ENCODE measurements at regions of chr11 and their contacts with region 1.

Region 1: DNA sequence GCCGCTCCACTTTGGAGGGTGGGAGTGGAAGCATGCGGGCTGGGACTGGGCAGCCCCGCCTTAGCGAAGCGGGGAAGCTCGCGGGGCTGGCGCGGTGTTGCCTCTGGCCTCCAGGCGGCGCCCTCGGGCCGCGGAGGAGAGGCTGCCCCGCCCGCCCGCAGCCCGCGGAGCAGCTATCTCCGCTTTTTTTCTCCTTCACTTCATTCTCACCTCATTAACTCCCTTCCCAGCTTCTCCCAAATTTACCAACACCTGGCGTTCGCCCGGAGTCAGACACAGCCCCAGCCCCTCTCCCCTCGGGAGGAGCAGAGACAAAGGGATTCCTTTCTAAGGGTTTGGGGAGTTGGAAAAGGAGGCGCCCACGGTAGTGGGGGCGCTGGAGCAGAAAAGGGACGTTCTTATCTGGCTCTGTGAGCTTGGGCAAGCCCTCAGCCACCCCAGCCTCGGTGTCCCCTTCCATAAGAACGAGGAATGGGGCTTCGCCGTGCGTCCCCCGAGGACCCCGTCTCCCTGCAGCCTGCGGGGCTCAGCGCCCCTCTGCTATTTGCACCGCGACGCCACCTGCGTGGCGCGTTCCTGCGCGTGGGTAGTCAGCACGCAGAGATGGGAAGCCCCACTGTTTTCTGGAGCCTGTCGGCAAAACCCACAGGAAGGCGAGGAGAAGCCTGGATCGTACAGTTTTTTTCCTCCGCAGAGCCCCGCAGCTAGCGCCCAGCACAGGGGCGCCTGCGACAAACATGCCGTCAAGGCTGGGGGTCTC is 1.5 kb upstream of the WNT11 start:
- DNase-seq: peak in 1 of 2 experiments; percentile 89
- H3K4me3 ChIP-seq: peak overlapping the region; percentile 30 to 62 (median 56)
- H3K27ac ChIP-seq: no peak overlapping the region
- H3K4me1 ChIP-seq: peaks cover 7 to 41% (median 20%) of the 10 kb centered on the region in 4 experiments
- H3K27me3 ChIP-seq: peaks cover 77 to 94% (median 87%) of the 10 kb centered on the region in 4 experiments
- CTCF ChIP-seq: peak; percentile 84 to 89 (median 84)
- EP300 ChIP-seq: no peak
- POLR2A ChIP-seq: no peak
- RAD21 ChIP-seq: peak; percentile 84 to 89

Region 2: DNA sequence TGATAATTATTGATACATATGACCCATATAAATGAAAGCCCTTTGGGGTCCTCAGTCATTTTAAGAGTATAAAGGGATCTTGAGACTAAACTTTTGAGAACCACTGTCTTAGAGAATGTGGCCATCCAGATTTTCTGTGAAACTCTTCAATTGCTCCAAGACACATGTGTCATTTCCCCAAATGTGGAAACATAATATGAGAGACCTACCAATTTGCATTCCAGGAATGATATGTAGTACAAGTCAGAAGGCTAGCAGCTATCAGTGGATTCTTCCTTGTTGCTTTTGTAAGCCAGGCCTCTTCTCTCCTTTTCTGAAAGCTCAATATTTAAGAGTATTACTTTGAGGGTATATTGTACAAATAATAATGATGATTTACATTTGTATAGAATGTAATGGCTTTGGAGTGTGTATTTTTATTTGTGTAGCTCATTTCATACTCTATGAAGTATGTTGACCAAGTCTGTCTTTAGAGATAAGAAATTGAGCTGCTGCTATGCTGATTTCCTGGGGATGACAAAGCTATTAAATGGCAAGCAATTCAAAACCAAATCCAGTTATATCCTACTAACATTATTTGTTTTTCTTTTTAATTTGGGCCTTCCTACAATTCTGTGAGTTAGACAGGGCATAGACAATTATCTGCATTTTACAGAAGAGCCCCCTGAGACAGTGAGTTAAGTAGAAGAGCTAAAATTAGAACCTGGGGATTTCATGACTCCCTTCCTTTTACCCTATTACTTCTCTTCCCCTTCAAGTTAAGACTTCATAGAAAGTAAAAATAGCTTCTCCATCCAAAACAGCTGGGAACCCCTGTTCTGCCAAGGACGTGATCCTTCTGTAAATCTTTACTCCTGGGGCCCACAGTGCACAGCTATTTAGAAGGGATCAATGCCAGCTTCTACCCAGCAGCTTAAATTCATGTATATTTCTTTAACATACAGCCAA is 133.4 kb before region 1 on chr11:
- CTCF ChIA-PET with region 1: no interaction called
- POLR2A ChIA-PET with region 1: no interaction called
- DNase-seq: no peak
- H3K4me3 ChIP-seq: no peak overlapping the region
- H3K27ac ChIP-seq: no peak overlapping the region
- H3K4me1 ChIP-seq: no peaks in the 10 kb centered on the region
- H3K27me3 ChIP-seq: no peaks in the 10 kb centered on the region
- CTCF ChIP-seq: no peak
- EP300 ChIP-seq: no peak
- POLR2A ChIP-seq: no peak
- RAD21 ChIP-seq: no peak

Region 3: DNA sequence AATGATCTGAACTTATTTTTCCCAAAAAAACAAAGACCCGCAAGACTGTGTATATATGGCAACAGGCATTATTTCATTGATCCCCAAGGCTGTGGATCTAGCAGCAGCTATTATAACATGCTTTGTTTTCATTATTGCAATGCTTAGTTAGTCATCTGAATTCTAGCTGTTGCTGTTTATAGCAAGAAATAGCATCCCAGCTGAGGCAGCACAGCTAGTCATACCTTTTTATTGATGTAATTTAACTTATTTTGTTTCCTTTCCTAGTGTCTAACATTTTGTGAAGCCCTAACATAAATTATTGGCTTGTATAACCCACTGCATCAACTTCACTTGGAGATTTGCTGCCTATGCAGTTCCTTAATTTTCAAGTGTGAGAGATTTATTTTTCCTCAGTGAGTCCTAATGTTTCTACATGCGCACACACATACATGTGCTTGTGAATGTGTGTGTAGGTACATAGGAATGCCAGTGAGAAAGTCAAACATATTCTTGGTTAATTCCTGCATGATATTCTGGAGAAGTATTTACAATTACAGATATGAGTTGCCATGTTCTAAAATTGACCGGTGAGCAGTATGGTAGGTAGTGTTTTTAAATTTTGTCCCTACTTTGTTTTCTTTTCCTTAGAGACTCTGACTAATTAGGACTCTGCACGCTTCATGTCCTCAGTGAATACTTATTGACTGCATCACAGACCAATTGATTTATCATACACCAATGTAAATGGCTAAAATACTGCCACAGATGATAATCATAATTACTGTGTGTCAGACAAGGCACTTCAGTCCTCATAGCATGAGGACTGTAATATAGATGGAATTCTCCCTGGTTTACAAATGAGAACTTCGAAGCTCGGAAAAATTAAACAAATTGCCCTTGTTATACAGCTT is 120.8 kb before region 1 on chr11:
- CTCF ChIA-PET with region 1: no interaction called
- POLR2A ChIA-PET with region 1: no interaction called
- DNase-seq: no peak
- H3K4me3 ChIP-seq: no peak overlapping the region
- H3K27ac ChIP-seq: no peak overlapping the region
- H3K4me1 ChIP-seq: peaks cover 0 to 12% (median 4%) of the 10 kb centered on the region in 4 experiments; a peak in 4 of 7 replicates
- H3K27me3 ChIP-seq: no peaks in the 10 kb centered on the region
- CTCF ChIP-seq: no peak
- EP300 ChIP-seq: no peak
- POLR2A ChIP-seq: no peak
- RAD21 ChIP-seq: no peak

Region 4: GRCh38 chr11:76193219-76193618 is 14.6 kb before region 1 on chr11:
- CTCF ChIA-PET with region 1: interaction called, 38 read pairs
- POLR2A ChIA-PET with region 1: interaction called, 4 read pairs
- DNase-seq: peak in 1 of 2 experiments; percentile 85
- H3K4me3 ChIP-seq: no peak overlapping the region
- H3K27ac ChIP-seq: no peak overlapping the region
- H3K4me1 ChIP-seq: peaks cover 0 to 10% (median 0%) of the 10 kb centered on the region in 4 experiments; a peak in 1 of 7 replicates
- H3K27me3 ChIP-seq: no peaks in the 10 kb centered on the region
- CTCF ChIP-seq: no peak
- EP300 ChIP-seq: no peak
- POLR2A ChIP-seq: no peak
- RAD21 ChIP-seq: no peak

Region 5: DNA sequence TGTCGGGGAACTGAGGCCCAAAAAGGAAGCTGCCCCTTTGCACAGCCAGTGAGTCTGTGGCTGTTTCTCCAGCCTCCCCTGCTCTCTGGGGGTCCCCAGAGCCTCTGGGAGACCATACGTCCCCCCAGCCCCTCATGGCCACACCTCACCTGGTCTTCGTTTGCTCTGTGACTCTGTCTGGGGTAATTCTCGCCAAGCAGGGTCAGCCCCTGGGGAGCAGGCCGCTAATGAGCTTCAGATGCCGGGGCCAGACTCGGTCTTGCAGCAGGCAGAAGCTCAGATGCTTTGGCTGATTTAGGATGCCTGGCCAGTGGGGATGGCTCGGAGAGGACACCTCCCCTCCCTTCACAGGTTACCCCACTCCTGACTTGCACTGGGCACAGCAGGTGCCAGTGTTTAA is 22.6 kb after region 1 on chr11:
- CTCF ChIA-PET with region 1: interaction called, 31 read pairs
- POLR2A ChIA-PET with region 1: interaction called, 39 read pairs
- DNase-seq: no peak
- H3K4me3 ChIP-seq: no peak overlapping the region
- H3K27ac ChIP-seq: no peak overlapping the region
- H3K4me1 ChIP-seq: peaks cover 0 to 8% (median 4%) of the 10 kb centered on the region in 4 experiments; a peak in 4 of 7 replicates
- H3K27me3 ChIP-seq: no peaks in the 10 kb centered on the region; a peak in 2 of 7 replicates
- CTCF ChIP-seq: no peak
- EP300 ChIP-seq: no peak
- POLR2A ChIP-seq: no peak
- RAD21 ChIP-seq: no peak

Region 6: DNA sequence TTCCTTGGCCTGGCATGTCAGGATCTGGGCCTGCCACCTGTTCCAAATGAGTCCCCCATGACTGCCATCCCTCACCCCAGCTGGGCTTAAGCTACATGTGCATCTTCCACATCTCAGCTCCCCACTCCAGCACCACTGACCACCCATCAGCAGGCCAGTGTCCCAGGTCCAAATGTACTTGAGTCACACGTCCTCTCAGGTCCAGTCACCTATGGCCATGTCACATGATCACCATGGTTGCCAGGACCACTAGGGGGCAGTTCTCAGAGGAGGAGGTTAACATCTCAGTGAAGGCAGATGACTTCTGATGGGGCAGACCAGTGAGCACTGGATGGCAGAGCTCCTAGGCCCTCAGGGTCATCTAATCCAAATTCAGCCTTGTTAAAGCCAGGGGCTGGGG is 40.4 kb after region 1 on chr11:
- CTCF ChIA-PET with region 1: interaction called, 83 read pairs
- POLR2A ChIA-PET with region 1: no interaction called
- DNase-seq: peak in 1 of 2 experiments; percentile 59
- H3K4me3 ChIP-seq: no peak overlapping the region
- H3K27ac ChIP-seq: no peak overlapping the region
- H3K4me1 ChIP-seq: peaks cover 0 to 9% (median 7%) of the 10 kb centered on the region in 4 experiments; a peak in 6 of 7 replicates
- H3K27me3 ChIP-seq: peaks cover 2 to 8% (median 6%) of the 10 kb centered on the region in 4 experiments; a peak in 6 of 7 replicates
- CTCF ChIP-seq: peak; percentile 54 to 74 (median 72)
- EP300 ChIP-seq: no peak
- POLR2A ChIP-seq: no peak
- RAD21 ChIP-seq: peak; percentile 35 to 57; a peak in 3 of 4 replicates

Region 7: GRCh38 chr11:76270387-76270786 is 62.6 kb after region 1 on chr11:
- CTCF ChIA-PET with region 1: interaction called, 10 read pairs
- POLR2A ChIA-PET with region 1: no interaction called
- DNase-seq: no peak
- H3K4me3 ChIP-seq: no peak overlapping the region
- H3K27ac ChIP-seq: no peak overlapping the region
- H3K4me1 ChIP-seq: no peaks in the 10 kb centered on the region
- H3K27me3 ChIP-seq: no peaks in the 10 kb centered on the region; a peak in 1 of 7 replicates
- CTCF ChIP-seq: no peak
- EP300 ChIP-seq: no peak
- POLR2A ChIP-seq: no peak
- RAD21 ChIP-seq: no peak

Region 8: DNA sequence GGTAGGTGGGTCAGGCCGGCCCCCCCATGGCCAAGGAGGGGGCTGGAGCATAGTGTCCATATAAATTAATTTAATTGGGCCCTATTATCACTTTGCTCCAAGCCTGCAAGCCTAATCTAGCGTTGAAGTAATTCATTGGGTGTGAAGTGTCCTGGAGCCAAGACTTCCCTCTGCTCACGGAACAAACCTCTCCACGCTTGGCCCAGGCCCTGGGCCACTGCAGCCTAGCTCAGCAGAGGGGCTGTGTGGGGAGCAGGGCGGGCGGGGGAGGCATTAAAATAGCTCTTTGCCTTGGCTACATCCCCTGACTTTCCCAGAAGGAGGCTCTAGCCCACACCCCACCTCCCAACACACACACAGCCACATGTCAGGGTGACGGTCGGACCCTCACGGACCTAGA is 99.6 kb after region 1 on chr11:
- CTCF ChIA-PET with region 1: interaction called, 252 read pairs
- POLR2A ChIA-PET with region 1: interaction called, 4 read pairs
- DNase-seq: no peak
- H3K4me3 ChIP-seq: no peak overlapping the region
- H3K27ac ChIP-seq: no peak overlapping the region
- H3K4me1 ChIP-seq: peaks cover 0 to 8% (median 2%) of the 10 kb centered on the region in 4 experiments; a peak in 6 of 7 replicates
- H3K27me3 ChIP-seq: no peaks in the 10 kb centered on the region
- CTCF ChIP-seq: no peak
- EP300 ChIP-seq: no peak
- POLR2A ChIP-seq: no peak
- RAD21 ChIP-seq: no peak

Region 9: GRCh38 chr11:76444384-76445123 is 236.7 kb after region 1 on chr11 and contains the start of gene EMSY:
- CTCF ChIA-PET with region 1: interaction called, 13 read pairs
- POLR2A ChIA-PET with region 1: no interaction called
- DNase-seq: peak; percentile 89 to 98
- H3K4me3 ChIP-seq: peak within 1 kb of the TSS; percentile 77 to 99 (median 96)
- H3K27ac ChIP-seq: peak within 1 kb of the TSS; percentile 98
- H3K4me1 ChIP-seq: peaks cover 0 to 20% (median 1%) of the 10 kb centered on the region in 4 experiments; a peak in 5 of 7 replicates
- H3K27me3 ChIP-seq: no peaks in the 10 kb centered on the region
- CTCF ChIP-seq: no peak
- EP300 ChIP-seq: no peak
- POLR2A ChIP-seq: peak; percentile 98
- RAD21 ChIP-seq: no peak
- total RNA-seq, gene EMSY: 32.2 and 34.6 TPM in 2 replicates

Measured in H1 (cell line).